ENCODE measurements at regions of chr7 and their contacts with region 1.

Region 1: GRCh38 chr7:30074422-30075030 is 46.3 kb downstream of the PLEKHA8 start:
- DNase-seq: no peak
- H3K4me3 ChIP-seq: no peak overlapping the region
- H3K27ac ChIP-seq: no peak overlapping the region
- H3K4me1 ChIP-seq: no peaks in the 10 kb centered on the region
- H3K27me3 ChIP-seq: no peaks in the 10 kb centered on the region
- CTCF ChIP-seq: peak in 2 of 3 experiments; percentile 21 to 46; a peak in 2 of 4 replicates
- EP300 ChIP-seq: no peak
- POLR2A ChIP-seq: no peak
- RAD21 ChIP-seq: peak; percentile 38 to 44

Region 2: GRCh38 chr7:30019387-30019786 is 55.1 kb before region 1 on chr7:
- CTCF ChIA-PET with region 1: no interaction called
- POLR2A ChIA-PET with region 1: no interaction called
- DNase-seq: no peak
- H3K4me3 ChIP-seq: no peak overlapping the region
- H3K27ac ChIP-seq: no peak overlapping the region
- H3K4me1 ChIP-seq: no peaks in the 10 kb centered on the region
- H3K27me3 ChIP-seq: no peaks in the 10 kb centered on the region
- CTCF ChIP-seq: no peak
- EP300 ChIP-seq: no peak
- POLR2A ChIP-seq: no peak
- RAD21 ChIP-seq: no peak

Region 3: GRCh38 chr7:30087371-30087770 is 12.8 kb after region 1 on chr7:
- CTCF ChIA-PET with region 1: interaction called, 13 read pairs
- POLR2A ChIA-PET with region 1: no interaction called
- DNase-seq: no peak
- H3K4me3 ChIP-seq: no peak overlapping the region
- H3K27ac ChIP-seq: no peak overlapping the region
- H3K4me1 ChIP-seq: peaks cover 0 to 3% (median 0%) of the 10 kb centered on the region in 4 experiments; a peak in 1 of 7 replicates
- H3K27me3 ChIP-seq: no peaks in the 10 kb centered on the region
- CTCF ChIP-seq: no peak
- EP300 ChIP-seq: no peak
- POLR2A ChIP-seq: no peak
- RAD21 ChIP-seq: no peak

Measured in H1 (cell line).